Stomach (tissue), 19 donors: ENCODE measurements at regions of chr6 and their contacts with region 1.

Region 1: DNA sequence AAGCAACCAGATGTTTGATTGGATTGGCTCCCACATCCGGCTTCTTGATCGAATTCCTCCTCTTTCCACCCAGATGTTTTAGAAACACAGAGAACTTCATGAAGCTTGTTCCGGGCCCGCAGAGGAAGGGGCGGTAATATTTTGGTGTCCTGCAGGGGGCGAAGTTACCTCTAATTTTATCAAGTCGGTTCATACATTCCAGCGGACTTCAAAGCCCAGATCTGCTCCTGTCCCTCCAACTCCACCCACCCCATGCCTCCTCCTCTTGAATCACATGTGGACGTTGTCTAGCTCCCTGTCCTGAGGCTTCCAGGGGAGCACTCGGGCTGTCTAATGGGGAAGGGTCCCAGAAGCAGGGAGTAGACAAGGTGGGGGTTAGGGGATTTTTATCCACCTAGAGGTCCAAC is 2.9 kb upstream of the BMP6 start:
- DNase-seq: peak; percentile 81 to 90
- H3K4me3 ChIP-seq: no peak overlapping the region
- H3K27ac ChIP-seq: no peak overlapping the region
- H3K4me1 ChIP-seq: peaks cover 20 to 36% (median 29%) of the 10 kb centered on the region in 4 donors
- H3K27me3 ChIP-seq: peaks cover 0 to 65% (median 22%) of the 10 kb centered on the region in 3 donors
- CTCF ChIP-seq: peak in 5 of 7 experiments; percentile 25 to 60 (median 33)
- EP300 ChIP-seq: no peak
- POLR2A ChIP-seq: no peak

Region 2: GRCh38 chr6:6105472-6106036 is 1617.5 kb before region 1 on chr6:
- intact Hi-C with region 1: no loop called
- DNase-seq: no peak
- H3K4me3 ChIP-seq: no peak overlapping the region
- H3K27ac ChIP-seq: no peak overlapping the region
- H3K4me1 ChIP-seq: no peaks in the 10 kb centered on the region
- H3K27me3 ChIP-seq: no peaks in the 10 kb centered on the region
- CTCF ChIP-seq: no peak
- EP300 ChIP-seq: no peak
- POLR2A ChIP-seq: no peak

Region 3: GRCh38 chr6:7594579-7595125 is 128.4 kb before region 1 on chr6:
- intact Hi-C with region 1: no loop called
- DNase-seq: no peak
- H3K4me3 ChIP-seq: no peak overlapping the region
- H3K27ac ChIP-seq: no peak overlapping the region
- H3K4me1 ChIP-seq: peaks cover 14 to 43% (median 28%) of the 10 kb centered on the region in 4 donors
- H3K27me3 ChIP-seq: no peaks in the 10 kb centered on the region
- CTCF ChIP-seq: no peak
- EP300 ChIP-seq: no peak
- POLR2A ChIP-seq: no peak

Region 4: DNA sequence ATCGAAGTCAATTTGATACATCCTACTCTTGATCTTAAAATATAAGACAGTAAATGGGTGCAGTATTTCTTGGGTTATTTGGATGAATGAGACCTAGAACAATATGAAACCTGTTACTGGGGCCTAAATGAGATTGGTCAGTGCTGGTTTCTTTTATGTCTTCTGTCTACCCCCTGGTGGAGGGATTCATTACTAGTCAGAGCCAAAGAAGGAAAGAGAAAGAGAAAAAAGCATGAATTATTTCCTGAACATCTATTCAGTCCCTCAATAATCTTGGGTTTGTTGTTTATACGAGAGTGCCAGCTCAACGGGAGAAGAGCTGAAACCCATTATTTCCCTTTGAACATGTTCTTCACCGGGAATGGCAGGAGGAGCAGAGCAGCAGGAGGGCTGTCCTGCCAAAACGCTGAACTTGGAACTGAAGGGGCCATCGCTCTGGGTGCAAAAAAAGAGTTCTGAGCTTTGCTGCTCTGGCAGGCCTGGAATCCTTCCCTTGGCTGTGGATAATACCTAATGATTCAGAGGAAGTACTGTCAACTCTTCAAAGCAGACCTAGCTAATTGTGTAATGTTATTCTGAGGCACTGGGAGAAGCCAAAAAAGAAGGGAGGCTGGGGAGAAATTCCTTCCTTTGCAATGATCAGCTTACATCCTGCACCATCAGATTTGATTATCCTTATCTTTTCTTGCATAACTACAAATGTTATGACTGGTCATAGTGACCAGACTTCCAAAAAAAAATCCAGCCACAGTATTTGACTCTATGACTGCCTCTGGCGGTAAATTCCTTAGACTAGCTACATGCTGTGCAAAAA is 269.2 kb after region 1 on chr6:
- intact Hi-C with region 1: loop called (anchors 5 kb)
- DNase-seq: peak in 1 of 2 donors; percentile 59
- H3K4me3 ChIP-seq: no peak overlapping the region
- H3K27ac ChIP-seq: peak overlapping the region in 3 of 5 donors; percentile 24 to 56 (median 46)
- H3K4me1 ChIP-seq: peaks cover 0 to 18% (median 6%) of the 10 kb centered on the region in 4 donors
- H3K27me3 ChIP-seq: no peaks in the 10 kb centered on the region
- CTCF ChIP-seq: peak in 3 of 7 experiments; percentile 33 to 44 (median 33)
- EP300 ChIP-seq: no peak
- POLR2A ChIP-seq: no peak